Activated CD4-positive, alpha-beta memory T cell treated with anti-CD3 and anti-CD28 coated beads for 36 hours (primary cell): ENCODE measurements at regions of chr10 and their contacts with region 1.

Region 1: DNA sequence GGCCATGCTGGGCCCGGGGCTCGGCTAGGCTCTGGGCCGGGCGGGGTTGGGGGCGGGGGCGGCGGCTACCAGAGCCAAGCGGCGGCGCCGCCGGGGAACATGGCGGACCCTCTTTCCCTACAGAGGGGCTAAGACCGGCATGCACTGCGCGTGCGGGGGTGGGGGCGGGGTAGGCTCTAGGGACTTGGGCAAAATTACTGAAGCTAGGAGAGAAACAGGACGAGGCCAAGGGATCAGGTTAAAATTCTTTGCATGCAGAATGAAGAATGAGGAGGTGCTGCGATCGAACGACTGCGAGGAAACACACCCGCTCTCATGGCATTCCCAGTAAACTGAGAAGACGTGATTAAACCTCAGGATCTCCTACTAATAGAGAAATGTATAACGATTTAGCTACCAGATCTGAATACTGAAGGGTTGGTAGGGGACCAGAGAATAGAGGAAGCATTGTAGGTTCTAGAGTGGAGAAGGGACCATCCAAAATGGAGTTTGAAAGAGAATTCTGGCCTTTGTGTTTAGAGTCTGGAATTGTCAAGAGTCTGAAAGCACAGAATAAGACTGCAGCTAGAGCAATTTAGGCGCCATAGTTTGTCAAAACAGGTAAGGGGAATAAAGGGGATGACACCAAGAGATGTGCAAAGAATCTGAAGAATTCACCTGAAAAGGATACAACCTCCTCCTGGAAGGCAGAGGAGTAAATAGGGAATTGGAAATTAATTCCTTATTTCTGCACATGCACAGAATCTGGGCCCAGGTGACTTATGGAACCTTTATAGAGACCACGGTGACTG is at the start of gene PPP3CB:
- DNase-seq: peak; percentile 96
- H3K4me3 Mint-ChIP-seq: peak within 1 kb of the TSS; percentile 86
- H3K27ac Mint-ChIP-seq: peak within 1 kb of the TSS; percentile 91
- H3K4me1 Mint-ChIP-seq: peaks cover 42% of the 10 kb centered on the region
- H3K27me3 Mint-ChIP-seq: no peaks in the 10 kb centered on the region
- total RNA-seq, gene PPP3CB: 48.4 to 50.2 TPM

Region 2: DNA sequence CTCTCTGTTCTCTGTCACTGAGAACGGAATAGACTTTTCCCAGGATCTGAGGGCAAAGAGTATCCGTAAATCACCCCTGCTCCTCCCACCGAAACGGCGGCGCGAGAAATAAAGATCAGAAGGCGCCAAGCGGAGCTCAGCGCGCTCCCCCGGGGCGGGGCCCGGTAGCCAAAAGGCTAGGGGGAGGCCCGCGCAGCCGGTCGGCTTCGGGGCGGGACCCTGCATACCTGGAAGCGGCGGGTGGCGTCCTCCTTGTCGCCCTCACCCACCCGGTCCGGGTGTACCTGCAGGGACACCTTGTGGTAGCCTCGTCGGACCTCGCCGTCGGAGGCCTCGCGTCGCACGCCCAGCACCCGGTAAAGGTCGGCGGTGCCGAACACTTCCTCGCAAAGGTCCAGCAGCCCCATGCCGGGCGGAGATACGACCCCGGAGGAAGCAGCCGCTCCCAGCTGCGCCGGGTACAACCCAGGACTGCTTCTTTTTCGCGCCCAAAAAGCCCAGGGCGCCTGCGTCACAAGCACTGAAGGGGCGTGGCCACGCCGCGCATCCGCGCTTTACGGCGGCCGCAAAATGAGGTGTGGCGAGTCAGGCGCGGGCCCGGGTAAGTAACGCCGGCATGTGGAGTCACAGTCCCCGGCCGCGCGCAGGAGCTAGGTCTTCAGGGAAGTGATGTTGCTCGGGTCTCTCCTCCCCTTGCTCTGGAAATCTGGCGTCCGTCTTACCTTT is 249.1 kb before region 1 on chr10 and contains the start of gene DNAJC9:
- CTCF ChIA-PET with region 1: no interaction called
- POLR2A ChIA-PET with region 1: interaction called, 10 read pairs
- intact Hi-C with region 1: loop called (anchors 1 kb)
- DNase-seq: peak; percentile 99
- H3K4me3 Mint-ChIP-seq: peak within 1 kb of the TSS; percentile 99
- H3K27ac Mint-ChIP-seq: peak within 1 kb of the TSS; percentile 94
- H3K4me1 Mint-ChIP-seq: peaks cover 61% of the 10 kb centered on the region
- H3K27me3 Mint-ChIP-seq: no peaks in the 10 kb centered on the region
- total RNA-seq, gene DNAJC9: 45.8 to 49.3 TPM

Region 3: DNA sequence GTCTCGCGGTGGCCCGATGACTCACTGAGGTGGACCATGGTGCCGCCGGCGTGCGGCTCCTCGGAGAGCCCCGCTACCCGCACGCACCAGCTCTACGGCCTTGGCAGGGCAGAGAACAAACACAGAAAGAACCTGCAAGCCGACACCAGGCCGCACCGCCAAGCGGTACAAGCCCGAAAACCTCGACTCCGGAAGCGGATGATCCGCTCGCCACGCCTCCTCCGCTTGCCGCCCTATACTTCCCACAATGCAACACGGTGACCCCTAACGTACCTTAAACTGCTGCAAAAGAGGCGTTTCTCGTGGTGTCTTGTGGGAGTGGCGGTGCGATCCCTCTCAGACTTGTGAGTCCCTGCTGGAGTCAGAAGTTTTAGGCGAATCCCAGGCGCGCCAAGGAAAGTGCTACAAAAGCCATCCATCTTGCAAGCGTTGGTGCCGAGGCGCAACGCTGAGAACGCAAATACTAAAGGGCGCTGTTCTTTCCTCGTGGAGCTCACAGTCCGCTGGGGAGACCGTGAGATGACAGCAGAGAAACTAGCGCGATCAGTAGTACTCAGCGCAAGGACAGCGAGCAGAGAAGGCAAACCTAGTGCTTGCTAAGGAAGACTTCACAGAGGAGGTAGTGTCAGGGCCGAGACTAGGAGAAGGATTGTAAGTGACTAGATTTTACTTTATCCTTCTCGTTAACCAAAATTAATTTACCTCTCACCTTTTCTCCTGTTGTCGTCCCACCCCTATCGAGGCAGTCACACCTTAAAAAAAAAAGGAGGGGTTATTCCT is 243.4 kb before region 1 on chr10 and contains the start of gene MRPS16:
- CTCF ChIA-PET with region 1: no interaction called
- POLR2A ChIA-PET with region 1: interaction called, 10 read pairs
- intact Hi-C with region 1: loop called (anchors 1 kb)
- DNase-seq: peak; percentile 96
- H3K4me3 Mint-ChIP-seq: peak within 1 kb of the TSS; percentile 97
- H3K27ac Mint-ChIP-seq: peak within 1 kb of the TSS; percentile 98
- H3K4me1 Mint-ChIP-seq: peaks cover 38% of the 10 kb centered on the region
- H3K27me3 Mint-ChIP-seq: no peaks in the 10 kb centered on the region
- total RNA-seq, gene MRPS16: 136 to 139 TPM

Region 4: GRCh38 chr10:73480158-73480557 is 15.9 kb before region 1 on chr10:
- CTCF ChIA-PET with region 1: no interaction called
- POLR2A ChIA-PET with region 1: interaction called, 8 read pairs
- intact Hi-C with region 1: loop called (anchors 1 kb)
- DNase-seq: no peak
- H3K4me3 Mint-ChIP-seq: peak overlapping the region; percentile 20
- H3K27ac Mint-ChIP-seq: no peak overlapping the region
- H3K4me1 Mint-ChIP-seq: peaks cover 31% of the 10 kb centered on the region
- H3K27me3 Mint-ChIP-seq: no peaks in the 10 kb centered on the region

Region 5: GRCh38 chr10:74306227-74306982 is 810.3 kb after region 1 on chr10:
- CTCF ChIA-PET with region 1: no interaction called
- POLR2A ChIA-PET with region 1: no interaction called
- intact Hi-C with region 1: no loop called
- DNase-seq: no peak
- H3K4me3 Mint-ChIP-seq: no peak overlapping the region
- H3K27ac Mint-ChIP-seq: no peak overlapping the region
- H3K4me1 Mint-ChIP-seq: peaks cover 8% of the 10 kb centered on the region
- H3K27me3 Mint-ChIP-seq: no peaks in the 10 kb centered on the region